CD4-positive, alpha-beta T cell (primary cell): ENCODE measurements at regions of chr5 and their contacts with region 1.

Region 1: GRCh38 chr5:149551200-149552037 is at the start of gene CSNK1A1:
- DNase-seq: peak; percentile 97 to 100 (median 99)
- ATAC-seq: peak; percentile 86
- H3K4me3 ChIP-seq: peak within 1 kb of the TSS; percentile 97
- H3K4me3 Mint-ChIP-seq: peak within 1 kb of the TSS; percentile 99
- H3K27ac ChIP-seq: peak within 1 kb of the TSS; percentile 94 to 98
- H3K27ac Mint-ChIP-seq: peak within 1 kb of the TSS; percentile 98
- H3K4me1 ChIP-seq: peaks cover 26% of the 10 kb centered on the region
- H3K4me1 Mint-ChIP-seq: peaks cover 36% of the 10 kb centered on the region
- H3K27me3 ChIP-seq: no peaks in the 10 kb centered on the region
- H3K27me3 Mint-ChIP-seq: no peaks in the 10 kb centered on the region
- CTCF ChIP-seq: peak; percentile 67
- total RNA-seq, gene CSNK1A1: 201 to 217 TPM

Region 2: GRCh38 chr5:148826053-148826738 is 725.2 kb before region 1 on chr5 and contains the start of gene ADRB2:
- CTCF ChIA-PET with region 1: no interaction called
- POLR2A ChIA-PET with region 1: no interaction called
- intact Hi-C with region 1: loop called in 1 of 2 experiments (anchors 10 kb)
- DNase-seq: peak; percentile 70 to 96 (median 82)
- ATAC-seq: peak; percentile 86
- H3K4me3 ChIP-seq: peak within 1 kb of the TSS; percentile 88
- H3K4me3 Mint-ChIP-seq: peak within 1 kb of the TSS; percentile 84
- H3K27ac ChIP-seq: peak within 1 kb of the TSS; percentile 53 to 68
- H3K27ac Mint-ChIP-seq: peak within 1 kb of the TSS; percentile 32
- H3K4me1 ChIP-seq: peaks cover 22% of the 10 kb centered on the region
- H3K4me1 Mint-ChIP-seq: peaks cover 30% of the 10 kb centered on the region
- H3K27me3 ChIP-seq: no peaks in the 10 kb centered on the region
- H3K27me3 Mint-ChIP-seq: peaks cover 13% of the 10 kb centered on the region
- CTCF ChIP-seq: no peak
- total RNA-seq, gene ADRB2: 1.2 to 1.6 TPM

Region 3: GRCh38 chr5:149442563-149443182 is 108.7 kb before region 1 on chr5:
- CTCF ChIA-PET with region 1: interaction called, 7 read pairs
- POLR2A ChIA-PET with region 1: interaction called, 3 read pairs
- intact Hi-C with region 1: loop called in 1 of 2 experiments (anchors 1 kb)
- DNase-seq: peak; percentile 40 to 81 (median 64)
- ATAC-seq: peak; percentile 83
- H3K4me3 ChIP-seq: no peak overlapping the region
- H3K4me3 Mint-ChIP-seq: no peak overlapping the region
- H3K27ac ChIP-seq: no peak overlapping the region
- H3K27ac Mint-ChIP-seq: no peak overlapping the region
- H3K4me1 ChIP-seq: peaks cover 12% of the 10 kb centered on the region
- H3K4me1 Mint-ChIP-seq: peaks cover 17% of the 10 kb centered on the region
- H3K27me3 ChIP-seq: no peaks in the 10 kb centered on the region
- H3K27me3 Mint-ChIP-seq: no peaks in the 10 kb centered on the region
- CTCF ChIP-seq: peak; percentile 90

Region 4: DNA sequence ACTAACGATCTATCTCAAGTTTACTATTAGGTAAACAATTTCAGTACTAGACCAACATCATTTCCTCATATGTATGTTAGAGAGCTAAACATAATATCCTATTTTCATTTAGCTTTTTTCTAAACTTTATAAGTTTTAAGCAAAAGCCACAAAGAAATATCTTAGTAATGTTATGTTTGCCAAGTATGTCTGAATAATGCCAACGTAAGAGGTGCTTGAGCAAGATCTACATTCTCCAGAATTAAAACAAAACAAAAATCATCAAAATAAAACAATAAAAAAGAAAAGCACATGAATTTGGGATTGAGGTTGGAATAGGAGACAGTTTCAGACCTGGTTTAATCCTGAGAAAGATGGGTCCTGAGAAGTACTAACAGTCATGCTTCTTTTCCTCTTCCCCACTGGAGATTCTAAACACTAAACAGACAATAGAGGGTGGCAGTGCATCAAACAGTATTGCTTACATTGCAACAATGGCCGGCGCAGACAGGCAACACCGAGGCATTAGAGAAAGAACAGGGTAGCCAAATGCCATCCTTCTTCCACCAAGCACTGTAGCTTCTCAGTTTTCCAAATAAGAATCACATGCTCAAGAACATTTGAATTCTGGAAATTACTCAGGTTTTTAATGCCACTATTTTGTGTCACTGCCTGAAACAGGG is 33.8 kb before region 1 on chr5:
- CTCF ChIA-PET with region 1: interaction called, 12 read pairs
- POLR2A ChIA-PET with region 1: interaction called, 13 read pairs
- intact Hi-C with region 1: no loop called
- DNase-seq: no peak
- ATAC-seq: no peak
- H3K4me3 ChIP-seq: no peak overlapping the region
- H3K4me3 Mint-ChIP-seq: peak overlapping the region; percentile 42
- H3K27ac ChIP-seq: no peak overlapping the region
- H3K27ac Mint-ChIP-seq: peak overlapping the region; percentile 71
- H3K4me1 ChIP-seq: peaks cover 17% of the 10 kb centered on the region
- H3K4me1 Mint-ChIP-seq: peaks cover 82% of the 10 kb centered on the region
- H3K27me3 ChIP-seq: no peaks in the 10 kb centered on the region
- H3K27me3 Mint-ChIP-seq: no peaks in the 10 kb centered on the region
- CTCF ChIP-seq: no peak

Region 5: GRCh38 chr5:150000256-150000989 is 449.0 kb after region 1 on chr5 and contains the starts of genes HMGXB3 and TIGD6:
- CTCF ChIA-PET with region 1: no interaction called
- POLR2A ChIA-PET with region 1: interaction called, 3 read pairs
- intact Hi-C with region 1: loop called in 1 of 2 experiments (anchors 5 kb)
- DNase-seq: peak; percentile 65 to 94 (median 76)
- ATAC-seq: peak; percentile 82
- H3K4me3 ChIP-seq: peak within 1 kb of the TSS; percentile 70
- H3K4me3 Mint-ChIP-seq: peak within 1 kb of the TSS; percentile 96
- H3K27ac ChIP-seq: peak within 1 kb of the TSS; percentile 72 to 79
- H3K27ac Mint-ChIP-seq: peak within 1 kb of the TSS; percentile 95
- H3K4me1 ChIP-seq: peaks cover 34% of the 10 kb centered on the region
- H3K4me1 Mint-ChIP-seq: peaks cover 38% of the 10 kb centered on the region
- H3K27me3 ChIP-seq: no peaks in the 10 kb centered on the region
- H3K27me3 Mint-ChIP-seq: no peaks in the 10 kb centered on the region
- CTCF ChIP-seq: no peak
- total RNA-seq, gene HMGXB3: 27.4 to 29.3 TPM
- total RNA-seq, gene TIGD6: 1.0 to 1.4 TPM